Naive thymus-derived CD4-positive, alpha-beta T cell (primary cell): ENCODE measurements at regions of chr2 and their contacts with region 1.

Region 1: GRCh38 chr2:177516824-177517544 is 124.4 kb downstream of the AGPS start:
- DNase-seq: no peak
- ATAC-seq: no peak
- H3K4me3 ChIP-seq: no peak overlapping the region
- H3K4me3 Mint-ChIP-seq: no peak overlapping the region
- H3K27ac ChIP-seq: no peak overlapping the region
- H3K27ac Mint-ChIP-seq: no peak overlapping the region
- H3K4me1 ChIP-seq: no peaks in the 10 kb centered on the region
- H3K4me1 Mint-ChIP-seq: peaks cover 0 to 2% (median 0%) of the 10 kb centered on the region in 7 donors
- H3K27me3 ChIP-seq: no peaks in the 10 kb centered on the region
- H3K27me3 Mint-ChIP-seq: no peaks in the 10 kb centered on the region

Region 2: GRCh38 chr2:177528341-177528933 is 11.5 kb after region 1 on chr2:
- CTCF ChIA-PET with region 1: no interaction called
- POLR2A ChIA-PET with region 1: no interaction called
- intact Hi-C with region 1: loop called in 1 of 2 experiments (anchors 1 kb)
- DNase-seq: no peak
- ATAC-seq: no peak
- H3K4me3 ChIP-seq: no peak overlapping the region
- H3K4me3 Mint-ChIP-seq: no peak overlapping the region
- H3K27ac ChIP-seq: no peak overlapping the region
- H3K27ac Mint-ChIP-seq: peak overlapping the region in 1 of 9 donors; percentile 12
- H3K4me1 ChIP-seq: no peaks in the 10 kb centered on the region
- H3K4me1 Mint-ChIP-seq: peaks cover 0 to 3% (median 0%) of the 10 kb centered on the region in 7 donors
- H3K27me3 ChIP-seq: no peaks in the 10 kb centered on the region
- H3K27me3 Mint-ChIP-seq: no peaks in the 10 kb centered on the region